K562 (cell line): ENCODE measurements at regions of chr12 and their contacts with region 1.

Region 1: GRCh38 chr12:128387811-128388422 is 120.9 kb downstream of the TMEM132C start:
- DNase-seq: peak; percentile 46 to 58 (median 50)
- ATAC-seq: peak; percentile 96
- H3K4me3 ChIP-seq: no peak overlapping the region
- H3K27ac ChIP-seq: no peak overlapping the region
- H3K4me1 ChIP-seq: no peaks in the 10 kb centered on the region; a peak in 1 of 5 replicates
- H3K27me3 ChIP-seq: peaks cover 2 to 22% of the 10 kb centered on the region in 2 experiments; a peak in 4 of 5 replicates
- CTCF ChIP-seq: peak; percentile 60 to 61 (median 60)
- EP300 ChIP-seq: no peak
- POLR2A ChIP-seq: no peak
- RAD21 ChIP-seq: peak; percentile 42 to 51

Region 2: GRCh38 chr12:128259556-128260070 is 128.3 kb before region 1 on chr12:
- CTCF ChIA-PET with region 1: interaction called, 4 read pairs
- POLR2A ChIA-PET with region 1: interaction called, 3 read pairs
- in situ Hi-C with region 1: no loop called
- intact Hi-C with region 1: loop called (anchors 1 kb)
- DNase-seq: peak; percentile 49 to 51 (median 50)
- ATAC-seq: peak; percentile 67
- H3K4me3 ChIP-seq: no peak overlapping the region
- H3K27ac ChIP-seq: no peak overlapping the region
- H3K4me1 ChIP-seq: no peaks in the 10 kb centered on the region
- H3K27me3 ChIP-seq: no peaks in the 10 kb centered on the region
- CTCF ChIP-seq: peak; percentile 68 to 76 (median 69)
- EP300 ChIP-seq: no peak
- POLR2A ChIP-seq: no peak
- RAD21 ChIP-seq: peak; percentile 72 to 75